Esophagus squamous epithelium (tissue), 5 donors: ENCODE measurements at regions of chr2 and their contacts with region 1.

Region 1: GRCh38 chr2:217988014-217988839 is 14.6 kb downstream of the TNS1 start:
- DNase-seq: no peak
- H3K4me3 ChIP-seq: peak overlapping the region in 2 of 4 donors; percentile 22 to 39
- H3K27ac ChIP-seq: peak overlapping the region; percentile 67 to 85 (median 84)
- H3K4me1 ChIP-seq: peaks cover 17 to 37% (median 27%) of the 10 kb centered on the region in 3 donors
- H3K27me3 ChIP-seq: no peaks in the 10 kb centered on the region
- CTCF ChIP-seq: peak; percentile 35 to 92 (median 87)
- POLR2A ChIP-seq: no peak

Region 2: GRCh38 chr2:217899231-217900009 is 88.8 kb before region 1 on chr2:
- intact Hi-C with region 1: loop called (anchors 5 kb)
- DNase-seq: no peak
- H3K4me3 ChIP-seq: no peak overlapping the region
- H3K27ac ChIP-seq: peak overlapping the region; percentile 63 to 95 (median 92)
- H3K4me1 ChIP-seq: peaks cover 64 to 100% (median 67%) of the 10 kb centered on the region in 3 donors
- H3K27me3 ChIP-seq: no peaks in the 10 kb centered on the region
- CTCF ChIP-seq: peak in 5 of 6 experiments; percentile 61 to 87 (median 77)
- POLR2A ChIP-seq: no peak